MCF 10A (cell line): ENCODE measurements at regions of chr15 and their contacts with region 1.

Region 1: GRCh38 chr15:82809404-82810060 is at the start of gene WHAMM:
- DNase-seq: peak; percentile 100
- H3K4me3 Mint-ChIP-seq: peak within 1 kb of the TSS; percentile 84
- H3K27ac Mint-ChIP-seq: peak within 1 kb of the TSS; percentile 84
- H3K4me1 Mint-ChIP-seq: peaks cover 22% of the 10 kb centered on the region
- H3K27me3 Mint-ChIP-seq: no peaks in the 10 kb centered on the region
- CTCF ChIP-seq: no peak
- total RNA-seq, gene WHAMM: 8.2 and 10.1 TPM in 2 replicates

Region 2: GRCh38 chr15:82540055-82540983 is 269.2 kb before region 1 on chr15 and contains the start of gene RPS17:
- CTCF ChIA-PET with region 1: interaction called, 3 read pairs
- POLR2A ChIA-PET with region 1: interaction called, 130 read pairs
- intact Hi-C with region 1: loop called (anchors 5 kb)
- DNase-seq: peak; percentile 95
- H3K4me3 Mint-ChIP-seq: peak within 1 kb of the TSS; percentile 92
- H3K27ac Mint-ChIP-seq: peak within 1 kb of the TSS; percentile 81
- H3K4me1 Mint-ChIP-seq: peaks cover 30% of the 10 kb centered on the region
- H3K27me3 Mint-ChIP-seq: no peaks in the 10 kb centered on the region
- CTCF ChIP-seq: peak; percentile 99
- total RNA-seq, gene RPS17: 2,707 and 3,065 TPM in 2 replicates

Region 3: GRCh38 chr15:82680200-82681102 is 129.1 kb before region 1 on chr15:
- CTCF ChIA-PET with region 1: interaction called, 3 read pairs
- POLR2A ChIA-PET with region 1: interaction called, 16 read pairs
- intact Hi-C with region 1: no loop called
- DNase-seq: peak; percentile 58
- H3K4me3 Mint-ChIP-seq: peak overlapping the region; percentile 77
- H3K27ac Mint-ChIP-seq: peak overlapping the region; percentile 80
- H3K4me1 Mint-ChIP-seq: no peaks in the 10 kb centered on the region
- H3K27me3 Mint-ChIP-seq: peaks cover 14% of the 10 kb centered on the region
- CTCF ChIP-seq: peak; percentile 18

Region 4: DNA sequence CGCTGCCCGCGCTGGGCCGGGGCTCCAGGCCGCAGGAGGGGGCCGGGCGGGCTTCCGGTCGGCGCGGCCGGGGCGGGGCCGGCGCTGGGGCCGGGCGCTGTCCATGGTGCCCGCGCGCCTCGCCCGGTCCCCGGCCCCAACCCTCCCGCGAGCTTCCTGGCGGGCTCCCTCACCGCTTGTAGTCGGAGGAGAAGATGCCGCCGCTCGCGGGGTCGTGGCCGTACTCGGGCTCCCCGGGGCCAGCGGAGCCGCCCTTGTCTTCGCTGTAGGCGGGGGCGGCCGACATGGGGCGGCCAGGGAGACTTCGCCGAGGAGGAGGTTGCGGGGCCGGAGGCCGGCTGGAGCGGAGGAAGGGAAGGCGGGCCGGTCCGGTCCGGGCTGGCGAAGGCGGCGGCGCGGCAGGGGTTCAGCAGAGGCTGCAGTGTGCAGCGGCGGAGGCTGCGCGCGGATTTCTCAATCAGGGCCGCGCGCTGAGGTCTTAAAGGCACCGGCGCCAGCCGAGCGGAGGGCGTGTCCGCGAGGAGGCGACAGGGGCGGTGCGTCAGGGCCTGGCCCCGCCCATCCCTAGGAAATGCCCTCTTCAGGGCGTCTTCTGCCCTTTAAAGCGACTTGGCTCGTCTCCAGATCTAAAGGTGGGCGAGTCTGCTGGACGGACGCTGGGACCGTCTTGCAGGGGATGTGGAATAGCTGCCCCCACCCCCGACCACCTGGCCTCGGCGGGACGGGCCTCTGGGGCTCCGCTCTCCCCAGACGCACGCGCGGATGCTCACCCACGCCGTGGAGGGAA is 99.9 kb before region 1 on chr15 and contains the start of gene AP3B2:
- CTCF ChIA-PET with region 1: no interaction called
- POLR2A ChIA-PET with region 1: interaction called, 7 read pairs
- intact Hi-C with region 1: loop called (anchors 10 kb)
- DNase-seq: peak; percentile 71
- H3K4me3 Mint-ChIP-seq: no peak within 1 kb of the TSS
- H3K27ac Mint-ChIP-seq: no peak within 1 kb of the TSS
- H3K4me1 Mint-ChIP-seq: no peaks in the 10 kb centered on the region
- H3K27me3 Mint-ChIP-seq: no peaks in the 10 kb centered on the region
- CTCF ChIP-seq: no peak
- total RNA-seq, gene AP3B2: 6.1 and 7.5 TPM in 2 replicates

Region 5: GRCh38 chr15:82737975-82738374 is 71.6 kb before region 1 on chr15:
- CTCF ChIA-PET with region 1: no interaction called
- POLR2A ChIA-PET with region 1: interaction called, 21 read pairs
- intact Hi-C with region 1: no loop called
- DNase-seq: no peak
- H3K4me3 Mint-ChIP-seq: no peak overlapping the region
- H3K27ac Mint-ChIP-seq: no peak overlapping the region
- H3K4me1 Mint-ChIP-seq: peaks cover 13% of the 10 kb centered on the region
- H3K27me3 Mint-ChIP-seq: no peaks in the 10 kb centered on the region
- CTCF ChIP-seq: no peak

Region 6: DNA sequence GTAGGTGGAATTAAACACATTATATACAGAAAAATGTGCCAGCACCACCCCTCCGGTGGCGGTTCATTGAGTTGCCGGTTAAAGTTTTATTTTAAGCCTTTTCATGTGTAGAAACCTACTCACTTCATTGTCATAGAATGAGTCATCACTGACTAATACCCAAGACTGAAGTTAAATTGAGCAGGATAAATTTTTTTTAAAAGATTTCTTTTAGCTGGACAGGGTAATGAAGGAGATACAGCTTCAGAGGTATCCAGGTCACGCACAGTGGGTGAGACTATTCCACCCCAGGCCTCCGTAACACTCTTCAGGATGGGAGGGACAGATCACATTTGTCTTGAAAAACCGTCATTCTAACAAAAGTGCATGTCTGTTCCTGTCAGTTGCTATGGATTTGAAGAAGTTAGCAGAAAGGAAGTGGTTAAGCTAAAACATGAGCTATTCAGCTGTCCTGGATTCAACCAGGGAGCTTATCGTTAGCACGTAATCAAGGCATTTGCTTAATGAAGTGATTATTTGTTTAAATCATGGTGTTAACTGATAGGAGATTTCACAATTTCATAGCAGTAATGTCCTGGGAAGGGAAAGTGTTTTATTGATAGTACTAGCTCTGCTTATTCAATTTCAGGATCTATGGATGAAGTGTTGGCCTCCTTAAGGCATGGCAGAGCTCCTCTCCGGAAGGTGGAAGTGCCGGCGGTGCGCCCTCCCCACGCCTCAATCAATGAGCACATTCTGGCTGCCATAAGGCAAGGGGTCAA is 23.2 kb after region 1 on chr15:
- CTCF ChIA-PET with region 1: interaction called, 4 read pairs
- POLR2A ChIA-PET with region 1: interaction called, 15 read pairs
- intact Hi-C with region 1: no loop called
- DNase-seq: peak; percentile 76
- H3K4me3 Mint-ChIP-seq: no peak overlapping the region
- H3K27ac Mint-ChIP-seq: peak overlapping the region; percentile 75
- H3K4me1 Mint-ChIP-seq: peaks cover 16% of the 10 kb centered on the region
- H3K27me3 Mint-ChIP-seq: no peaks in the 10 kb centered on the region
- CTCF ChIP-seq: no peak

Region 7: GRCh38 chr15:82909080-82909815 is 99.7 kb after region 1 on chr15:
- CTCF ChIA-PET with region 1: no interaction called
- POLR2A ChIA-PET with region 1: no interaction called
- intact Hi-C with region 1: no loop called
- DNase-seq: no peak
- H3K4me3 Mint-ChIP-seq: no peak overlapping the region
- H3K27ac Mint-ChIP-seq: no peak overlapping the region
- H3K4me1 Mint-ChIP-seq: no peaks in the 10 kb centered on the region
- H3K27me3 Mint-ChIP-seq: peaks cover 11% of the 10 kb centered on the region
- CTCF ChIP-seq: no peak